Heart left ventricle (tissue), 16 donors: ENCODE measurements at regions of chr10 and their contacts with region 1.

Region 1: DNA sequence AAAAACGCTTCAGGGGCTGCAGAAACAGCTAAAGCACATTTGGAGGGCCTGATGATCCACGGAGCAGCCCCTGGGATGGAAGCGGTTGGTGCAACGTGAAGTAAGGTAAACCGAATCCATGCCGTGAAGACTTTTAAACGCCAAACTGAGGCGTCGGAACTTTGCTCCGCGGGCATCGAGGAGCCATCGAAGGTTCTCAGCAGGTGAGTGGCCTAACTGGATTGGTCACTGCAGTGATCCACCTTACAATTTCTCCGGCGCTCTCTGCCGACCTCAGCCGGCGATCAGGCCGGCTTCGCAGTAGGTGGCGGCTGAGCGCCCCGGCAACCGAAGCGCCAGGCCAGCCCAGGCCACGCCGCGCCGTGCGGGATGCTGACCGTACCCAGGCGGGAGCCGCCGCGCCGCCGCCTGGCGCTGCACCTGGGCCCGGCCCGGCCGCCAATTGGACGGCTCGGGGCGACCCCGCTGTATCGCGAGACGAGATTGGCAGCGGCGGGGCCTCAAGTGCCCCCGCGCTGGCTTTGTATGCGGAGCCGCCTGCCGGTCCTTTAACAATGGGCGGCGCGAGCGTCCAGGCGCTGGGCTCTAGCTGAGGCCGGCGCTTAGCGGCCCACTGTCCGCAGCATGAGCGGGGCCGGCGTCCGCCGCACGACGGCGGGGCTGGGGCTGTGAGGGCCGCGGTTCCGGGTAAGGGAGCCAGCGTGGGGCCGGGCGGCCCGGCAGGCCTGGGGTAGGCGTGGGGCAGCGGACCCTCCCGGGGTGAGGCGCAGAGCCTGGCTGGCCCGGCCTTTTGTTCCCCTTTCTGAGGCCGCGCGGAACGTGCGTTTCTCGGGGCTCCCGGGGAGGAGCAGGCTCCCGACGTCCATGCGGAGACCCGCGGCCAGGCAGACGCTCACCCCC is at the start of gene CCNJ:
- DNase-seq: peak; percentile 89 to 94 (median 90)
- ATAC-seq: peak; percentile 90 to 99 (median 98)
- H3K4me3 ChIP-seq: peak within 1 kb of the TSS; percentile 75 to 93 (median 88)
- H3K27ac ChIP-seq: peak within 1 kb of the TSS; percentile 31 to 92 (median 86)
- H3K4me1 ChIP-seq: peaks cover 0 to 22% (median 14%) of the 10 kb centered on the region in 12 donors
- H3K27me3 ChIP-seq: no peaks in the 10 kb centered on the region
- CTCF ChIP-seq: peak in 7 of 12 donors; percentile 9 to 47 (median 29)
- POLR2A ChIP-seq: peak; percentile 26 to 84
- total RNA-seq, gene CCNJ: 2.2 to 4.0 (median 2.7) TPM

Region 2: GRCh38 chr10:96082153-96082552 is 38.9 kb after region 1 on chr10:
- intact Hi-C with region 1: loop called in 2 of 10 experiments (anchors 1 to 5 kb)
- DNase-seq: no peak
- ATAC-seq: no peak
- H3K4me3 ChIP-seq: no peak overlapping the region
- H3K27ac ChIP-seq: no peak overlapping the region
- H3K4me1 ChIP-seq: peaks cover 0 to 10% (median 0%) of the 10 kb centered on the region in 12 donors
- H3K27me3 ChIP-seq: no peaks in the 10 kb centered on the region
- CTCF ChIP-seq: no peak
- POLR2A ChIP-seq: no peak

Region 3: GRCh38 chr10:96089670-96090462 is 46.6 kb after region 1 on chr10:
- intact Hi-C with region 1: loop called in 5 of 10 experiments (anchors 1 to 5 kb)
- DNase-seq: peak; percentile 94 to 97 (median 96)
- ATAC-seq: peak; percentile 97 to 99 (median 98)
- H3K4me3 ChIP-seq: peak overlapping the region; percentile 56 to 90 (median 80)
- H3K27ac ChIP-seq: peak overlapping the region; percentile 87 to 99 (median 93)
- H3K4me1 ChIP-seq: peaks cover 0 to 15% (median 1%) of the 10 kb centered on the region in 12 donors
- H3K27me3 ChIP-seq: peaks cover 2 to 38% (median 23%) of the 10 kb centered on the region in 9 donors
- CTCF ChIP-seq: no peak
- POLR2A ChIP-seq: peak in 1 of 2 donors; percentile 39